IMR-90 (cell line): ENCODE measurements at regions of chr15 and their contacts with region 1.

Region 1: DNA sequence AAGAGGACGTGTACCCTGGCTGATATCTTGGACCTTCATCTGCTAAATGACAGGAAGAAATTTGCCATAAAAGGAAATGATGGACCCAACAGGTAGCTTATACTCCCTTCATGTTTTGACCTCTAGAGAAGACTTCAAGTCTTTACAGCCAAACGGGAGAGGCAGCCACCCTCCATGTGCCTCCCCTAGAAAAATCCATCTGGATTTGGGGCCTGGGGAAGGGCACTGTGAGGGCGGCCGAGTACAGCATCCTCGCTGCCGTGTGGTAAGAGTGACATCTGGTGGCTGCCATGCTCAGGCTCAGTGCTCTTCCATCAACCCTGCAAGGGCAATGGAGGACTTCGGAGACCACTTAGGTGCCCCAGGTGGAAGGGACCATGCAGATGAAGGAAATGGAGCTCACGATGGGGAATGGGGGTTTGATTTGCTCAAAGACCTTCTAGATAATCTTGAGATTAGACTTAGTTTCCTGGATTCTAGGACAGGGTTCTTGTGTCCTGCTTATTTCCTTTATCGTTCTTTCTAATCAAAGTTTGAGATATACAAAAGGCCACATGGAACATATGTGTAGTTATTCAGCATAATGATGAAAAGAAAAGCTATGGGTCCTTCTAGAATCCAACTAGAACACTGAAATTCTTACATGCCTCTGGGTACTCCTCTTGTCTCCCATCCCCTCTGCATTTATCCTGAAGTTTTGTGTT is 44.4 kb downstream of the AQP9 start:
- DNase-seq: peak; percentile 41
- ATAC-seq: peak; percentile 98
- H3K4me3 ChIP-seq: no peak overlapping the region
- H3K27ac ChIP-seq: no peak overlapping the region
- H3K4me1 ChIP-seq: no peaks in the 10 kb centered on the region
- H3K27me3 ChIP-seq: peaks cover 15% of the 10 kb centered on the region
- CTCF ChIP-seq: peak; percentile 74
- POLR2A ChIP-seq: no peak
- RAD21 ChIP-seq: peak; percentile 83

Region 2: DNA sequence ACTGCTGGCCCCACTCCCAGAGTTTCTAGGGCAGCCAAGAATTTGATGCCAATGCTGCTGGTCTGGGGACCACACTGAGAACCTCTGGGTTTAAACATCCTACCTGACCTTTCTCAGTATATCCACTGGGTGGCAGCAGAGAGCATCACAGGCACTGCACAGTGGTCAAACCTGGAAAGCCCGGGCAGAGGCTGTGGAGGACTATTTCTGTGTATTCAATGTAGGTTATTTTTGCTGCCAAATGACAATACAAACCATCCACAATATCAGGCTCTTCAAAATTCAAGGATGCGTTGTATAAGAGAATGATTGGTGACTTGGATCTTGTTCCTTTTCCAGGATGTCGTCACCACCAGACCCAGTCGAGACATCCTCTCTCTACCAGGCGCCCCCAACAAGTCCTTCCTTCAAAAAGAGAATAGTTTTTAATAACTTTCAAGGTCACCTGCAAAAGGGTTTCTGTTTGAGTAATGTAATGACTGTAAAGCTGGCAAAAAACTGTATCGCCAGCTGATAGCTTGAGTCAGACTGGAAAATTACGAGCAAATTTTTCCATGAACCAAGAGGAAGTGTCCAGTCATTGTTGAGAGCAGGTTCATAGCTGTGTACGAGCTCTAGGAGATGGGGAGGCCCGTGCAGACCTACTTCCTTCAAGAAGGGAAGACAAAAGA is 621.4 kb before region 1 on chr15:
- CTCF ChIA-PET with region 1: interaction called, 3 read pairs
- POLR2A ChIA-PET with region 1: no interaction called
- dilution Hi-C with region 1: no loop called
- in situ Hi-C with region 1: no loop called
- intact Hi-C with region 1: loop called (anchors 2 kb)
- DNase-seq: peak; percentile 65
- ATAC-seq: peak; percentile 100
- H3K4me3 ChIP-seq: no peak overlapping the region
- H3K27ac ChIP-seq: no peak overlapping the region
- H3K4me1 ChIP-seq: no peaks in the 10 kb centered on the region
- H3K27me3 ChIP-seq: peaks cover 18% of the 10 kb centered on the region
- CTCF ChIP-seq: peak; percentile 81
- POLR2A ChIP-seq: no peak
- RAD21 ChIP-seq: peak; percentile 68

Region 3: GRCh38 chr15:57667171-57667849 is 515.3 kb before region 1 on chr15:
- CTCF ChIA-PET with region 1: no interaction called
- POLR2A ChIA-PET with region 1: no interaction called
- dilution Hi-C with region 1: no loop called
- in situ Hi-C with region 1: no loop called
- intact Hi-C with region 1: no loop called
- DNase-seq: peak; percentile 71
- ATAC-seq: peak; percentile 97
- H3K4me3 ChIP-seq: no peak overlapping the region
- H3K27ac ChIP-seq: no peak overlapping the region
- H3K4me1 ChIP-seq: no peaks in the 10 kb centered on the region
- H3K27me3 ChIP-seq: peaks cover 8% of the 10 kb centered on the region
- CTCF ChIP-seq: peak; percentile 57
- POLR2A ChIP-seq: no peak
- RAD21 ChIP-seq: peak; percentile 66

Region 4: DNA sequence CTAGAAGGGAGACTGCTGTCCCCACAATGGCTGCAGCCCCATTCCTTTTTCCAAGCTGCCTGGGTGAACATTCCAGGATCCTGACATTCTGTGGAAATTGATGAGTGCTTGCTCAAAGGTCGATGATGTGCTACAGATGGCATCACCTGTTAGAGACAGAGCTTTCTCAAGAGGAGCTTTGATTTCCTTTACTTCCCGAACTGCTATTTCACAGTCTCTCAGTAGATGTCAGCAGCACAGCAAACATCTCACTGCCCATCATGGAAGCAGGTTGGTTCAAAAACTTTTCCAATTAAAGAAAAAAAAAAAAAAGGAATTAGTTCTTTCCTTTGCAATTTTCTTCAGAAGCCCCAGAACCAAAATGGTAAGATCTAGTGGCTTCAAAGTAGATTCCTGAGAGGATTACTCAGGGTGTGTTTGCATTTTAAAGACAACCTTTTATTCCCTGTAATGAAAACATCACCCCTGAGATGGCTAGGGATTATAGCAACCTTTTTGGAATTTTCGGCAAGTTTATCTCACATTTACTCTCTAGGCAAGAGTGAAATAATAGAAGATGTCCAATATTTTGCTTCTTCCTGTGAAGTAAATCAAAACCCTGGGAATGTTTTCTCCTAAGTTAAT is 431.3 kb before region 1 on chr15:
- CTCF ChIA-PET with region 1: no interaction called
- POLR2A ChIA-PET with region 1: no interaction called
- dilution Hi-C with region 1: no loop called
- in situ Hi-C with region 1: no loop called
- intact Hi-C with region 1: loop called (anchors 5 kb)
- DNase-seq: peak; percentile 40
- ATAC-seq: peak; percentile 73
- H3K4me3 ChIP-seq: no peak overlapping the region
- H3K27ac ChIP-seq: no peak overlapping the region
- H3K4me1 ChIP-seq: no peaks in the 10 kb centered on the region
- H3K27me3 ChIP-seq: no peaks in the 10 kb centered on the region; the same call in 1 of the 2 replicates
- CTCF ChIP-seq: peak; percentile 51
- POLR2A ChIP-seq: no peak
- RAD21 ChIP-seq: peak; percentile 55

Region 5: DNA sequence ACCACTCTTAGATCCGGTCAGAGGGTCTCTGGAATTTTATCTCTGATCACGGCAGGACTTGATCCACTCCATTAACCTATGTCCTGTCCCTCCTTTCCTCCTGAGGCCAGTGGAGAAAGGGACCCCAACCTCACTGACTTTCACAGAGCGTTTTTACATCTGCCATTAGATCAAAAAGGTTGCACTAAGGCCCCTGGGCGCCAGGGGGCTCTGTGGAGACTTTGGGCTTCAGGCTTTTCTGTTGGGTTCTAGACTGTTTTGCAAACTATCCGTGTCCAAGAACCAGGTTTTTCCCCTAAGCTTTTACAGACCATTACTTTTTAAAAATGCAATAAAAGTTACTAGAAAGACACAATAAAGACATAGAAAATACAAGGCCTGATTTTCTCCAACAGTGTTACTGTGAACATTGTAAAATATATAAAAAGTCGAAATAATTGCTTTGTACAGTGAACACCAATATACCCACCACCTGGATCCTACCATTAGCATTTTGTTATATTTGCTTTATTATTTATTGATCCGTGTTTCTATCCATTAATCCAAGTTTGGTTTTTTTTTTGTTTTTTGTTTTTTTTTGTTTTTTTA is 316.4 kb before region 1 on chr15:
- CTCF ChIA-PET with region 1: interaction called, 3 read pairs
- POLR2A ChIA-PET with region 1: no interaction called
- dilution Hi-C with region 1: no loop called
- in situ Hi-C with region 1: loop called (anchors 10 kb)
- intact Hi-C with region 1: loop called (anchors 1 kb)
- DNase-seq: peak; percentile 15
- ATAC-seq: peak; percentile 68; the same call in 1 of the 2 replicates
- H3K4me3 ChIP-seq: no peak overlapping the region
- H3K27ac ChIP-seq: no peak overlapping the region
- H3K4me1 ChIP-seq: no peaks in the 10 kb centered on the region
- H3K27me3 ChIP-seq: no peaks in the 10 kb centered on the region
- CTCF ChIP-seq: peak; percentile 63
- POLR2A ChIP-seq: no peak
- RAD21 ChIP-seq: peak; percentile 45

Region 6: DNA sequence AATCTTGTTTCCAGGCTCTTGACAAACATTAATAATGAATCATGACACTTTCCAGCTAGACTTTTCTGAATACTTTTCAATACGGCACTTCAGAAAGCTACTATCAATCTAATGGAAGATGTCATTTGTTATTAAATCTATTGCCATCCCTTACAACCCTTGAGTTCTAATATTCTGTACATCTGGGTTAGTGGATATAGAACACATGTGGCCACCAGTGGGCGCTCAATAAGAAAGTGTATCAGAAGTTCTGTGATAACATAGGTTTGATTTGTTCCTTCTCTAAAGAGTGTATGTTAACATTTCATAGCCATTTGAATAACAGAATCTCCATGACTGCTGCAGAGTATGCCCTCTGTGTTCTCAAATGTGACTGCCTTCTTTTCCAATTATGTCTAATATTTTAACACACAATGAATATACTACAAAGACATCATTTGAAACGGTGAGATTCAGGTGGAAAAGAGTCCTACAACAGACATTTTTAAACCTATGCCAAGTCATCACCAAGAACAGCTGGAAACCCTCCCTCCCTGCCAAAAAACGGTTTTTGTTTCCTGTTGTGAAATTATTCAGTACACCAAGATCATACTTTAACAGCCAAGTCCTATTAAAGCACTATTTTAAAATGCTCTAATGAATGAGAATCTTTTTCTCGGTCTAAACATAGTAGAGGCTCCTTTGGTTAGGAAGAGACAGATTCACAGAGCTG is 139.3 kb before region 1 on chr15:
- CTCF ChIA-PET with region 1: no interaction called
- POLR2A ChIA-PET with region 1: no interaction called
- dilution Hi-C with region 1: no loop called
- in situ Hi-C with region 1: no loop called
- intact Hi-C with region 1: loop called (anchors 1 kb)
- DNase-seq: peak; percentile 39
- ATAC-seq: peak; percentile 81
- H3K4me3 ChIP-seq: no peak overlapping the region
- H3K27ac ChIP-seq: no peak overlapping the region
- H3K4me1 ChIP-seq: no peaks in the 10 kb centered on the region
- H3K27me3 ChIP-seq: peaks cover 2% of the 10 kb centered on the region; the same call in 1 of the 2 replicates
- CTCF ChIP-seq: peak; percentile 60
- POLR2A ChIP-seq: no peak
- RAD21 ChIP-seq: peak; percentile 38